Calu3 (cell line): ENCODE measurements at regions of chr4 and their contacts with region 1.

Region 1: GRCh38 chr4:141853091-141853764 is 216.8 kb downstream of the IL15 start:
- DNase-seq: peak; percentile 62
- H3K4me3 Mint-ChIP-seq: peak overlapping the region; percentile 33
- H3K27ac Mint-ChIP-seq: peak overlapping the region; percentile 63
- H3K4me1 Mint-ChIP-seq: peaks cover 46% of the 10 kb centered on the region
- H3K27me3 Mint-ChIP-seq: no peaks in the 10 kb centered on the region
- CTCF ChIP-seq: no peak

Region 2: DNA sequence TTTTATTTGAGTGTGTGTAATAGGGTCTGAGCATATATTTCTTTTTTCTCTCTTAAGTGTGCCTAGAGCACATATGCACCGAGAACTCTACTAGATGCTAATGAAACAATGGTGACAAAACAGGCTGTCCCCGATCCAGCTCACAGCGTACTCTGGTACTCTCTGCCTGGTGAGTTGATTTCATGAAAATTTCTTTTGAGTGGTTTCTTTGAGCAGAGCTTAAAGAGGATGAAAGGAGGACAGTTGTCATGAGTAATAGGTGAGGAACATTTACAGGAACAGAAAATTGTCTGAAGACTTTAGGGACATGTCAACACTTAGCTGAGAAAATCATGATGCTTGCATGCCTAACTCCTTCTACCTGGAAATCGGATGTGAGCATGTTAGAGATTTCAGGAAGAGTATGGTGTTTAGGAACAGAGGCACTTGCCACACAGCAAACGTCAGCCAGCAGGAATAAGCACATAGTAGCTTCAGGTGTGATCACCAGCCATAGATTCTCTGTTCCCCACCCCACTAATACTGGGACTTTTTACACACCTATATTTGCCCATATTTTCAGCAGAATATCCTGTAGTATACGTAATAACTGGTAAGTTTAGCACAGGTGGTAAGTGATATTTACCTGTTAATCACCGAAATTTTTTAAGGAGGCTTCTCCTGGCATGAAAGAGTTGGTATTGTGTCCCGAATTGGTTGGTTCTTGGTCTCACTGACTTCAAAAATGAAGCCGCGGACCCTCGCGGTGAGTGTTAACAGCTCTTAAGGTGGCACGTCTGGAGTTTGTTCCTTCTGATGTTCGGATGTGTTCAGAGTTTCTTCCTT is 521.5 kb before region 1 on chr4:
- CTCF ChIA-PET with region 1: no interaction called
- intact Hi-C with region 1: loop called (anchors 5 kb)
- DNase-seq: no peak
- H3K4me3 Mint-ChIP-seq: peak overlapping the region; percentile 85
- H3K27ac Mint-ChIP-seq: peak overlapping the region; percentile 96
- H3K4me1 Mint-ChIP-seq: peaks cover 16% of the 10 kb centered on the region
- H3K27me3 Mint-ChIP-seq: no peaks in the 10 kb centered on the region
- CTCF ChIP-seq: no peak